Gastrocnemius medialis (tissue), 4 donors: ENCODE measurements at regions of chr6 and their contacts with region 1.

Region 1: DNA sequence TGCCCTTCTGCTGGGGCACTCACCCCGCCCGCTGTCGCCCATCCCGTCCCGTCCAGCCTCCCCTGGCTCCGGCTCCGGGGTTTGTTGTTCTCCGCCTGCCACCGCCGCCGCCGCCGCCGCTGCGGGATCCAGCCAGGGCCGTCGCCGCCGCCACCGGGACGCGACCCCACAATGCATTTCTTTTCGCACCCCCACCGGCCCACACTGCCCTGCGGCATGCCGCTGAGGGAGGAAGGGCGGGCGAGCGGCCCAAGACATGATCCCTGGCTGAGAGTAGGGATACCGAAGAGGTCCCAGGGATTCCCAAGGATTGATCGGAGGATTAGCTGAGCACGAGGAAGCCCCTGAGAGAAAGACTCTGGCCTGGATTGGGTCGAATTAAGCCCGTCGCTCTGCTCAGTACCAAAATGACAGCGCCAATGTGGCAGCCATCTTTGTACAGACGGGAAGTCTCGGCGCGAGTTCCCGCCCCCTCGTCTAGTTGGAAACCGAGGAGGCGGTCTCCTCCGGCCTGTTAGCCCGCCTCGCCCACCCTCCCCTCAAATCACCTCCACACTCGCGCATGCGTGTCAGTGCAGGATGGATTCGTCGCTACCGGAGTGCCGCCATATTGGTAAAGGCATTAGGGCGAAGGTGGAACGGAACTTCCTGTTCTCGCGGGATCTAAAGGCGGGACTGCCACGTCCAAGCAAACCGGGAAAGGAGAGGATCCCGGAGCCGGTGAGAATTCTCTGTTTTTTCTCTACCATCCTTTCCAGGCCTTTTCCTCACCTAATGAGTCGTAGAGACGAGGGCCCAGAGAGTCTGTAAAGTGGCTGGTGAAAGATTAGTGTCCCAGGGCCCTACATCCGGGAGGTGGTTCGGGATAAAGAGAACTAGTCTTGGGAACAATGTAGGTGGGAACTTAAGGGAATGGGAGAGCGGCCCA is at the starts of genes RXRB and SLC39A7:
- DNase-seq: peak; percentile 99
- ATAC-seq: peak; percentile 81 to 86
- H3K4me3 ChIP-seq: peak within 1 kb of the TSS; percentile 84 to 98 (median 86)
- H3K27ac ChIP-seq: peak within 1 kb of the TSS; percentile 94 to 98 (median 96)
- H3K4me1 ChIP-seq: peaks cover 44 to 52% of the 10 kb centered on the region in 2 donors
- H3K27me3 ChIP-seq: no peaks in the 10 kb centered on the region
- CTCF ChIP-seq: peak in 1 of 5 experiments; percentile 20
- POLR2A ChIP-seq: peak; percentile 61 to 71
- total RNA-seq, gene RXRB: 20.8 to 38.4 (median 24.6) TPM
- total RNA-seq, gene SLC39A7: 21.9 to 45.4 (median 26.2) TPM

Region 2: DNA sequence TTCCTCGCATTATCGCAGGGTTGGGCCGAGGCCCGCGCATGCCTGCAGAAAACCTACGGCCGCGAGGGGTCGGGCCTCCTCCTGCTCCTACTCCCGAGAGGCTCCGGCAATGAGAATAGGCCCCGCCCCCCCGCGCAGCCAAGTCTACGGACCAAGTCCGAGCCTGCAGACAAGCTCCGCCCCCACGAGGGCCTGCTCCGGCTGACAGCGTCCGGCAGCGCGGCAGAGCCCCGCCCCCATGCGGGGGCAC is 1004.9 kb before region 1 on chr6:
- in situ Hi-C with region 1: no loop called
- intact Hi-C with region 1: loop called (anchors 5 kb)
- DNase-seq: peak; percentile 100
- ATAC-seq: peak in 1 of 2 donors; percentile 83
- H3K4me3 ChIP-seq: peak overlapping the region in 3 of 4 donors; percentile 67 to 86 (median 74)
- H3K27ac ChIP-seq: peak overlapping the region; percentile 91 to 98 (median 96)
- H3K4me1 ChIP-seq: peaks cover 28 to 32% of the 10 kb centered on the region in 2 donors
- H3K27me3 ChIP-seq: no peaks in the 10 kb centered on the region
- CTCF ChIP-seq: peak in 4 of 5 experiments; percentile 54 to 70 (median 56)
- POLR2A ChIP-seq: no peak

Region 3: DNA sequence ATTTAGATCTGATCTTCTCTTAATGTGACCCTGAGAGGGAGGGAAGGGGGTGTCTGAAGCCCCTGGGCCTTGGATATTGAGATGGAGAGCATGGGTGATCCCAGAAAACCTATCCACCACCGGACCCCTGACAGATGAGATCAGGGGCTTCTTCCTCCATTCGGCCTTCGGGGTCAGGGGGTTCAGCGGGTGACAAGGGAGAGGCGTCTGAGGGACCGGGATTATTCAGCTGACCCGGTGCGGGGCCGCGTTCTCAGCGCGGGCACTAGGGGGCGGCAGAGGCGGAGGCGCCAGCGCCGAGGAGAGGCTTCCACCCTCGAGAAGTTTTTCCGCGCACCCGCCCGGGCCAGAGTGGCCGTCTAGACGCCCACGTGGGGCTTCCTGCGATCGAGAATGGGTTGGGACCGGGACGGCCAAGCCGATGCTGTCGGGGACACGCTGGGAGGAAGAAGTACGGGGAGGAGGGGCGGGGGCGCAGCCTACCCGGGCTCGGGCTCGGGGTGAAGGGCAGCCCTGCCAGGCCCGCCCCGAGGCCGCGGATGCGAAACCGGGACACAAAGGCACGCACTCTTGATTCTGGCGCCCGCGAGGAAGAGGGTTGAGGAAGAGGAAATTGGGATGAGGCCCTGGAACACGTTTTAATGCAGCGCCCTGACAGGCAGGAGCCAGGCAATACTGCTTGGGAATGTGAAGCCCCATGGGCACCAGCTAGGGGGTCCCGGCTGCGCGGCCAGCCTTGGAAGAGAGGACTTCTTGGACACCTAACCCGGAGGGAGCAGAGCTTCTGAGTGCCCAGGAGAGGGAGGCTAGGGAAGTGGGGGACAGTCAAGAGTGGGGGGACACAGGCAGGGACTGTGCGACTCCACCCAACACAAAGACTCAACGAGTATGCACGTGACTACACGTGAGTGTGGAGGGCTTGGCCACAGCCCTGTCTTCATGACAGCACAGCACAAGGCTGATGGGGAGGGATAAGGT is 38.8 kb before region 1 on chr6:
- in situ Hi-C with region 1: no loop called
- intact Hi-C with region 1: loop called (anchors 1 kb)
- DNase-seq: peak; percentile 34 to 70
- ATAC-seq: peak; percentile 88 to 94
- H3K4me3 ChIP-seq: peak overlapping the region; percentile 52 to 77 (median 62)
- H3K27ac ChIP-seq: peak overlapping the region in 2 of 4 donors; percentile 15 to 41
- H3K4me1 ChIP-seq: peaks cover 0 to 6% of the 10 kb centered on the region in 2 donors
- H3K27me3 ChIP-seq: no peaks in the 10 kb centered on the region
- CTCF ChIP-seq: peak; percentile 76 to 97 (median 94)
- POLR2A ChIP-seq: no peak

Region 4: DNA sequence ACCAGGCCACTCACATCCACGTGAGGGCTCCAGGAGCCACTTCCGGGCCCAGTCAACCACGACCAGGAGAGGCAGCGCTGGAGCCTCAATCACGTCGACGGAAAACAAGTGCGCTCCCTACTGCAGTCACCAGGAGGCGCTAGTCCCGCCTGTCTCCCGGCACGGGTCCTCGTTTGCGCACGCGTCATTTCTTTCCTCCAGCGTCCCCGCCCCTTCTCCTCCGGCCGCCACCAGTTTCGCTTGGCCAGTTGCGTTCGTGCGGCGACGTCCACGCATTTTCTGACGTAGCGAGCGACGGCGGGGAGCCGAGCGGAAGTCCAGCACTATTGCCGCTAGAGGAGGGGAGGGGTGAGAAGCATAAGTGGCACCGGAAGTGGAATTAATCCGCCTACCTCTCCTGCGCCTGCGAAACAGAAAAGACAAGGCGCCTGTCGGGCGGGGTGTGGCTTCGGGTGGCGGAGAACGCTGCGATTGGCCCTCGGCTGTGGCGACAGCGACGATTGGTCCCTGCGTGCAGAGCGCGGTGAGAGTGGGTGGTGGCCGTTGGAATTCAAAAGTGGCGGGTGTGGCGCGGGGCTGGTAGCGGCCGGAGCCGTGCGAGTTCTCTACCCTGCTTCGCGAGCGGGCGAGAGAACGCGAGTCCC is 190.9 kb after region 1 on chr6 and contains the start of gene KIFC1:
- in situ Hi-C with region 1: no loop called
- intact Hi-C with region 1: loop called (anchors 1 kb)
- DNase-seq: peak; percentile 98 to 99
- ATAC-seq: peak; percentile 98 to 99
- H3K4me3 ChIP-seq: peak within 1 kb of the TSS; percentile 55 to 65 (median 58)
- H3K27ac ChIP-seq: peak within 1 kb of the TSS; percentile 85 to 96 (median 94)
- H3K4me1 ChIP-seq: peaks cover 4 to 11% of the 10 kb centered on the region in 2 donors
- H3K27me3 ChIP-seq: no peaks in the 10 kb centered on the region
- CTCF ChIP-seq: peak; percentile 96 to 98 (median 96)
- POLR2A ChIP-seq: no peak
- total RNA-seq, gene KIFC1: 0.64 to 1.4 TPM in 2 of 4 donors, not detected in the others

Region 5: DNA sequence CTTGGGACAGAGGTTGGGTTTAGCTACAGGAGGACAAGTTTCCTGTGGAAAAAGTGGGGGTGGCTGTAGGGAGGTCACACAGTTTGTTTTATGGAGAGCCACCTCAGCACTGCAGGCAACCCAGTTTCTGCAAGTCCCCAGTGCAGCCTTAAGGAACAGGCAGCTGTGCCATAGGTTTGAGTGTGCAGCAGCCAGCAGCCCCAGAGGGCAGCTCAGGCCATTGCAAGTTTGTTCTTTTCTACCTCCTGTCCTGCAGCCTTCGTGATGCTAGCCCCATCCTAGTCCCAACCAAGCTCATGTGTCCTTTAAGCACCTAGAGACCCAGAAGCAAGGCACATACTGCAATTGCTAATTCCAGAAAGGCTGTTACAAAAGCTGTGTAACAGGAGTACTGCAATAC is 312.7 kb after region 1 on chr6:
- in situ Hi-C with region 1: no loop called
- intact Hi-C with region 1: no loop called
- DNase-seq: no peak
- ATAC-seq: no peak
- H3K4me3 ChIP-seq: no peak overlapping the region
- H3K27ac ChIP-seq: no peak overlapping the region
- H3K4me1 ChIP-seq: peaks cover 0 to 4% of the 10 kb centered on the region in 2 donors
- H3K27me3 ChIP-seq: no peaks in the 10 kb centered on the region
- CTCF ChIP-seq: no peak
- POLR2A ChIP-seq: no peak